OCI-LY7 (cell line): ENCODE measurements at regions of chr21 and their contacts with region 1.

Region 1: DNA sequence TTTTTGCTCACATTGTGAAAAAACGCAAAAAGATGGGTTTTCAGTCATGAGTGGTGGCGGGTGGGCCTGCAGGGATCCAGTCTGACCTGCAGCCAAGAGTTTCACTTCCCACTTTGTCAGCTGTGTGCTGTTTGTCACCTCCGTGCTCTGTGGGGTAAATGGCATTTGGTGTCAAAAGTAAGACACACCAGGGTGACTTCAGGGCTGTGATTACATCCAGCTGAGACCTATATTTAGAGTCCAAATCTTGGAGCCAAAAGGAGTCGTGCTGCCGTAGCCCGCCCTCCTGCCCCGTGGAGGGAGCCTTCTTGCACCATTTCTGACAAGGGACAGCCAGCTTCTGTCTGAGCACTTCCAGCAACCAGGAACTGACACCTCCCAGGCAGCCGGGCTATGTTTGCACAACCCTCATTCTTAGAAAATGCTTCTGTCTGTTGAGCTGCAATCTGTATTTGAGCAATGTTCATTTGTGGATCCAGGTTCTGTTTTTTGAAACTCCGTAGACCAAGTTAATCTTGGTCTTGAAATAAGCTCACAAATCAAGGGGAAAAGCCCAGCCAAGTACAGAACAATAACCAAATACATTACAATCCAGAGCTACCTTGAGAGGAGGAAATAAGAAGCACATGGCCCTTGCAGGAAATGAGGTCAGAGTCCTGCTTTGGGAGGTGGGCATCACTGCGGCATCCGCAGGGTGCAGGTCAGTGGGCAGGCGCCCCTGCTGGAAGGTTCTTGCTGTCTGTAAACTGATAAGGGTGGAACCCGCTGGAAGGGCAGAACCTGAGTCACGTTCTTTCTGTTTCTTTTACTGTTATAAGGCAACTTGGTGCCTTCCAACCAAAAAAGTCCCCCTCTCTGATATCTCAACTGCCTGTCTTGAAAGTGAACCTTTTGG is 14.4 kb downstream of the ABCG1 start:
- DNase-seq: peak; percentile 97
- H3K4me3 ChIP-seq: peak overlapping the region; percentile 61
- H3K27ac ChIP-seq: peak overlapping the region; percentile 99
- H3K4me1 ChIP-seq: peaks cover 99% of the 10 kb centered on the region
- CTCF ChIP-seq: peak; percentile 64

Region 2: DNA sequence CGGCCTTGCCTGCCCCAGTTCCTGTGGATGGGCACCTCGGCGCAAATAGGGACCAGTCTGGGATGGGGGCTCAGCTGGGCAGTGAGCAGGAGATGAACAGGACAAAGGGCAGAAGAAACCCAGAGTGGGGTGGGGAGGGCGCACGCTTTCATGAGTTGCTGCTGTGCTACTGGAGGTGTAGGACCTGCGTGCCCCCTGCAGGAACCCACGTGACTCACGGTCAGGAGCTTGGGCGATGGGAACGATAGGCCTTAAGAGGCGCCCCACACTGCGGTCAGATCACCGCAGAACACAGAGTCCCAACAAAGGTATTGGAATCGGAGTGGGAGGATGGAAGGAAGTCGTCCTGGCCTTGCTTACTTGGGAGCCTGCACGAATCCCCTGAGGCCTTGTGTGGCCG is 371.3 kb before region 1 on chr21:
- CTCF ChIA-PET with region 1: no interaction called
- POLR2A ChIA-PET with region 1: no interaction called
- intact Hi-C with region 1: loop called (anchors 5 kb)
- DNase-seq: peak; percentile 69
- H3K4me3 ChIP-seq: peak overlapping the region; percentile 64
- H3K27ac ChIP-seq: peak overlapping the region; percentile 96
- H3K4me1 ChIP-seq: peaks cover 67% of the 10 kb centered on the region
- CTCF ChIP-seq: peak; percentile 67

Region 3: GRCh38 chr21:42248783-42249597 is 15.7 kb after region 1 on chr21:
- CTCF ChIA-PET with region 1: interaction called, 4 read pairs
- POLR2A ChIA-PET with region 1: interaction called, 9 read pairs
- intact Hi-C with region 1: loop called (anchors 2 kb)
- DNase-seq: peak; percentile 91
- H3K4me3 ChIP-seq: peak overlapping the region; percentile 44
- H3K27ac ChIP-seq: peak overlapping the region; percentile 90
- H3K4me1 ChIP-seq: peaks cover 89% of the 10 kb centered on the region
- CTCF ChIP-seq: no peak

Region 4: DNA sequence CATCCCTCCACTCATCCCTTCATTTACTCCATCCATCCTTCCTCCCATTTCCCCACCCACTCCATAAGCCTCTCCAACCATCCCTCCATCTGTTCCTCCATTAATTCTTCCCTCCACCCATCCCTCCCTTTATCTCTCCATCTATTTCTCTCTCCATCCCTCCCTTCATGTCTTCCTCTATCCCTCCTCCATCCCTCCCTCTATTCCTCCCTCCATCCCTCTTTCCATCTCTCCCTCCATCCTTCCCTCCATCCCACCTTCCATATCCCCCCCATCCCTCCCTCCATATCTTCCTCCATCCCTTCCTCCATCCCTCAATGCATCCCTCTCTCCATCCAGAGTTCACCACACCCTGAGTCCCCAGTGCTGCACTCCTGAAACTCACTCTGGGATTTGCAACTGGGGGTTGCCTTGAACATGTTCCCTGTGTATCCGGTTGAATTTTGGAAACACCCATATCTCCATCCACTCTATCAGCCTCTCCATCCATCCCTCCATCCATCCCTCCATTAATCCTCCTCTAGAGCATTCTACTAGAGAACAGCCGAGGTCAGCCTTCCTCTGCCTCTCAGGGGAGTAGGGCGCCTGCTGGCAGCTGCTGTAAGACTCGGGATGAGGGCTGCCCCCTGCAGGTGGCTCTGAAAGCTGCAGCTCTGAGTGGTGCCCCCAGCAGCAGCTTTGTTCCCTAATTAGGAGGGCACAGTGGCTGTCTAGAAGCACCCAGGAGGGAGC is 25.0 kb after region 1 on chr21:
- CTCF ChIA-PET with region 1: interaction called, 4 read pairs
- POLR2A ChIA-PET with region 1: interaction called, 5 read pairs
- intact Hi-C with region 1: loop called (anchors 1 kb)
- DNase-seq: peak; percentile 87
- H3K4me3 ChIP-seq: no peak overlapping the region
- H3K27ac ChIP-seq: no peak overlapping the region
- H3K4me1 ChIP-seq: peaks cover 48% of the 10 kb centered on the region
- CTCF ChIP-seq: peak; percentile 99

Region 5: GRCh38 chr21:42299324-42300044 is 66.2 kb after region 1 on chr21:
- CTCF ChIA-PET with region 1: no interaction called
- POLR2A ChIA-PET with region 1: no interaction called
- intact Hi-C with region 1: no loop called
- DNase-seq: no peak
- H3K4me3 ChIP-seq: no peak overlapping the region
- H3K27ac ChIP-seq: no peak overlapping the region
- H3K4me1 ChIP-seq: no peaks in the 10 kb centered on the region
- CTCF ChIP-seq: no peak

Region 6: GRCh38 chr21:42467140-42467983 is 234.0 kb after region 1 on chr21:
- CTCF ChIA-PET with region 1: no interaction called
- POLR2A ChIA-PET with region 1: no interaction called
- intact Hi-C with region 1: loop called (anchors 5 kb)
- DNase-seq: peak; percentile 58
- H3K4me3 ChIP-seq: no peak overlapping the region
- H3K27ac ChIP-seq: no peak overlapping the region
- H3K4me1 ChIP-seq: peaks cover 87% of the 10 kb centered on the region
- CTCF ChIP-seq: peak; percentile 66